Common myeloid progenitor, CD34-positive (primary cell): ENCODE measurements at regions of chr4 and their contacts with region 1.

Region 1: GRCh38 chr4:150010525-150011126 is 67.6 kb upstream of the DCLK2 start:
- DNase-seq: peak; percentile 44 to 62 (median 50)
- H3K4me3 ChIP-seq: no peak overlapping the region
- H3K27ac ChIP-seq: no peak overlapping the region
- H3K4me1 ChIP-seq: peaks cover 0 to 2% (median 0%) of the 10 kb centered on the region in 4 experiments
- H3K27me3 ChIP-seq: peaks cover 0 to 2% (median 0%) of the 10 kb centered on the region in 5 experiments

Region 2: DNA sequence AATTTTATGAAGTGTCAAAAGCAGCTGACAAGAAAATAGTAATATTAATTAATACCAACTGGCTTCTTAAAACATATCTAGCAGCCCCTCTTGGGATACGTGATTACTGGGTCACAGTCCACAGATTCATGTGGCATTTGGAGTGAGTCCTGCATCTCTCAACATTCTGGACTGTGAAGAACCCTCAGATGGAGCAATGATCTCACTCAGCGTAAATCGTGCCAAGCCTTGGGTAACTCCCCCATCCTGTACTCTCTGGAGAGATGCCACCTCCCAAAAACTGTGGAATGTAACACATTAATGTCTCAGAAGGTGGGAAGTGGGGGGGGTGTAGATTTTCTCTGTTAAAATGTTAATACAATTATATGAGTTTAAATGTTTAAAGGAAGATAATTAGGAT is 76.7 kb before region 1 on chr4:
- CTCF ChIA-PET with region 1: no interaction called
- POLR2A ChIA-PET with region 1: no interaction called
- DNase-seq: no peak
- H3K4me3 ChIP-seq: no peak overlapping the region
- H3K27ac ChIP-seq: no peak overlapping the region
- H3K4me1 ChIP-seq: no peaks in the 10 kb centered on the region
- H3K27me3 ChIP-seq: no peaks in the 10 kb centered on the region

Region 3: DNA sequence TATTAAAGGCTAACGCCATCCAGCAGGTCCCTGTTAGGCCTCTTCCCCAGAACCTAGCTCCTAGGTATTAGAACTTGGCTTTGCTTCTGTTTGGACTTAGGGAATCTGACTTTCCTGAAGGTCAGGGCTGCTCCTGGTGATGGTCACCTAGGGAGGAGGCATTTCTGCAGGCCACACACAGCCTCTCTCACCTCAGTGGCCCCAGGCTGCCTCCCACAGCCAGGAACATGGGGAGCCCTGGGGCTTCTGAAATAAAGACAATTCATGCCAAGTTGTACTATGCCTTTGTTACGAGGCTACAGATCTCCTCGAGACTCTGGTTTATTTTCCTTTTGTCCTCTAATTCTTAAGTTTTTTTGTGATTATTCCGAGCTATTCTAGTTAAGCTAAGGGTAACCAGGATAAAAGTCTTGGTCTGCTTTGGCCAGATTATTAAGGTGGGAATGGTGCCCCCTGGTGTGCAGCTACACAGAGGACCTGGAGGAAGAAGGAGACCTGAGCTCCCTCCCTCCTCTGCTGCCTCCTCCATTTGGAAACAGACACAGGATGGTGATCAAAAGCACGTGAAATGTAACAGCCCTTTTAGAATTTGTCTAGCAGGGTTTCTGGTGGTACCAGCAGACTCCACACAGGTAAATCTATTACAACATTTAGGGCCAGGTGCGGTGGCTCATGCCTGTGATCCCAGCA is 198.7 kb after region 1 on chr4:
- CTCF ChIA-PET with region 1: interaction called, 38 read pairs
- POLR2A ChIA-PET with region 1: no interaction called
- DNase-seq: peak; percentile 63 to 79 (median 72)
- H3K4me3 ChIP-seq: no peak overlapping the region
- H3K27ac ChIP-seq: no peak overlapping the region
- H3K4me1 ChIP-seq: peaks cover 0 to 5% (median 0%) of the 10 kb centered on the region in 4 experiments
- H3K27me3 ChIP-seq: no peaks in the 10 kb centered on the region

Region 4: GRCh38 chr4:150242820-150243458 is 232.3 kb after region 1 on chr4:
- CTCF ChIA-PET with region 1: interaction called, 48 read pairs
- POLR2A ChIA-PET with region 1: no interaction called
- DNase-seq: peak; percentile 16 to 48 (median 18)
- H3K4me3 ChIP-seq: no peak overlapping the region
- H3K27ac ChIP-seq: no peak overlapping the region
- H3K4me1 ChIP-seq: peaks cover 0 to 8% (median 1%) of the 10 kb centered on the region in 4 experiments
- H3K27me3 ChIP-seq: peaks cover 0 to 2% (median 0%) of the 10 kb centered on the region in 5 experiments